WTC11 (cell line): ENCODE measurements at regions of chr1 and their contacts with region 1.

Region 1: DNA sequence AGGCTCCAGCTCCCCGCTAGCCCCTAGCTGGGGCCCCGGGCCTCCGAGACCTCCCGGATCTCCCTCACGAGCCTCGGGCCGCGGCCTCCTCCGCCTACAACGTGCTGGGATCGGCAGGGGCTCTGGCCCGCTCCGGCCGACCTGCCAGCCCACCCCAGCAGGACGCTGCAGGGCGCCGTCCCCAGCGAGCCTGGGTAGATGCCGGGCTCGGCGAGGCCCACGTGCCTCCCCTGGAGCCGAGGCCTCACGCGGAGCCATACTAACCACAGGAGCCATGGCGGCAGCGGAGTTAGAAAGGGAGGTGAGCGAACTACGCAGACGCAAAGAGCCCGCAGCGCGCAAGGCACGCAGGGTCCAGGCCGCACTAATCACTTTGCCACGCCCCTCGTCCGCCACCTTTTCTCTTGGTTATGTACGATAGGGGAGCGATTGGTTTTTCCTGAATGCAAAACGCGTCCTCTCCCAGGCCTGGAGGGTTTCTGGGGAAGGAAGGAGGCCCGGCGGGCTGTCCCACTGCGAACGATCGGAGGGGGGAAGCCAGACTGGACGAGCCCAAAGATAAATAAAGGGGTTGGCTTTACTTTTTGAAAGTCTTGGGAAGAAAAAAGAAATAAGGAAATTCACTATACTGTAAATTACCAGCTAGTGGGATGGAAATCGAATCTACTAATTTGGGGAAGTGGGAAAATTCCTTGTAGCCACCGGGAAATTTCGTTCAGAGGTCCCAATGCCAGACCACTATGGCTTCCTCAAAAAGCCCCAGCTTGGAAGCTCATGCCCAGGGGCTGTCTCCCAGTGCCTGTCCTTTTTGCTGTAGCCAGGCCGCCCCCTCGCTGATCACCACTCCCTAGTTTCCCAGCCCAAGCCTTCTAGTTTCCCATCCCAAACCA is at the start of gene RPL22:
- DNase-seq: peak; percentile 99
- ATAC-seq: peak; percentile 93
- H3K4me3 Mint-ChIP-seq: peak within 1 kb of the TSS; percentile 97
- H3K27ac Mint-ChIP-seq: peak within 1 kb of the TSS; percentile 96
- H3K4me1 Mint-ChIP-seq: peaks cover 37% of the 10 kb centered on the region
- H3K27me3 Mint-ChIP-seq: no peaks in the 10 kb centered on the region
- CTCF ChIP-seq: no peak
- total RNA-seq, gene RPL22: 441 to 512 TPM (median 491 TPM) in 3 replicates

Region 2: DNA sequence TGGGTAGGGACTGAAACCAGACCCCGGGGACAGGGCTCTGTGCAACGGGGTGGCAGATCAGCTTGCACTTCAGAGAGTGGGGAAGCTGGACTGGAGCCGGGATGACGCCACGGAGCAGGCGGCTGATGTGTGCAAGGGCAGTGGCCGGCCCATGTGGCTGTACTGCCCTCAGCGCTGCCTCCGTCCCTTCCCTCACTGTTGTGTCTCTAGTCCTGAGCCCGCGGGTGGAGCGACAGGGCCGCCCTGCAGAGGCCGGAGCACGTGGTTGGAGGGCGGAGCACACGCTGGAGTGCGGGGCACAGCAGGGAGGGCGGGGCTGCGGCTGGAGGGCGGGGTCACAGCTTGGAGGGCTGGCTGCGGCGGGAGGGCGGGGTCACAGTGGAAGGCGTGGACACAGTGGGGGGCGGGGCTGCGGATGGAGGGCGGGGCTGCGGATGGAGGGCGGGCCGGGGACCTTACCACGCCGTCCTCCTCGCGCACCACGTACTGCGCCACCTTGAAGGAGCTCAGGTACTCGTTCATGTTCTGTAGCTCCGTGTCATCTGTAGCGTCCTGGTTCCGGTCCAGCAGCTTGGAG is 71.9 kb before region 1 on chr1:
- CTCF ChIA-PET with region 1: interaction called, 19 read pairs
- POLR2A ChIA-PET with region 1: no interaction called
- DNase-seq: peak; percentile 93
- ATAC-seq: peak; percentile 92
- H3K4me3 Mint-ChIP-seq: peak overlapping the region; percentile 44; the same call in 1 of the 2 replicates
- H3K27ac Mint-ChIP-seq: no peak overlapping the region
- H3K4me1 Mint-ChIP-seq: 0 out of 2 replicates have a peak, but pooled peaks cover 3% of the 10 kb centered on the region
- H3K27me3 Mint-ChIP-seq: peaks cover 25% of the 10 kb centered on the region
- CTCF ChIP-seq: no peak